Activated T-helper 1 cell treated with anti-CD3 and anti-CD28 coated beads, Interleukin-12 subunit alpha, Interleukin-12 subunit beta, Interleukin-2, Interleukin-4 antibody, amounts not matched to agents 30 ng/mL and 10 ng/mL and 1 ng/mL, durations not matched to agents 14 hours and 24 hours and 36 hours (primary cell): ENCODE measurements at regions of chr3 and their contacts with region 1.

Region 1: GRCh38 chr3:188417271-188417696 is 263.3 kb downstream of the LPP start:
- DNase-seq: no peak
- H3K4me3 Mint-ChIP-seq: no peak overlapping the region
- H3K27ac Mint-ChIP-seq: no peak overlapping the region
- H3K4me1 Mint-ChIP-seq: peaks cover 32% of the 10 kb centered on the region
- H3K27me3 Mint-ChIP-seq: no peaks in the 10 kb centered on the region

Region 2: DNA sequence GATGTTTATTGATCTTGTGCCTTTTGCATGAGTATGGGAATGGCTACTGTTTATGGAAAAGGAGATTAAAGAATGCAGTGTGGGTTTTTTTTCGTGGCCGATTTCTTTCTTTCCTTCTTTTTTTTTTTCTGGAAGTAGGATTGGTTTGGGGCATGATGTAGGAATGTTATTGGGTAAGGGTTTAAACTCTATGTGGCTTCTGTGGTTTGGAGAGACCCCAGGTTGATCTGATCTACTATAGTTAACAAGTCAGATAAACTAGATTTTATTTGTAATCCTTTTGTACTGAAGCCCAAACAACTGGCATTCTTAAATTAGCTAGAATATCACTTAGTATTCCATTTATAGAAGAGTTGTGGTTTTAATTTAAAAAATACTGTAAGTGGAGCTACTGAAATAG is 41.5 kb after region 1 on chr3:
- intact Hi-C with region 1: loop called (anchors 5 kb)
- DNase-seq: no peak
- H3K4me3 Mint-ChIP-seq: no peak overlapping the region
- H3K27ac Mint-ChIP-seq: no peak overlapping the region
- H3K4me1 Mint-ChIP-seq: peaks cover 4% of the 10 kb centered on the region
- H3K27me3 Mint-ChIP-seq: peaks cover 2% of the 10 kb centered on the region

Region 3: DNA sequence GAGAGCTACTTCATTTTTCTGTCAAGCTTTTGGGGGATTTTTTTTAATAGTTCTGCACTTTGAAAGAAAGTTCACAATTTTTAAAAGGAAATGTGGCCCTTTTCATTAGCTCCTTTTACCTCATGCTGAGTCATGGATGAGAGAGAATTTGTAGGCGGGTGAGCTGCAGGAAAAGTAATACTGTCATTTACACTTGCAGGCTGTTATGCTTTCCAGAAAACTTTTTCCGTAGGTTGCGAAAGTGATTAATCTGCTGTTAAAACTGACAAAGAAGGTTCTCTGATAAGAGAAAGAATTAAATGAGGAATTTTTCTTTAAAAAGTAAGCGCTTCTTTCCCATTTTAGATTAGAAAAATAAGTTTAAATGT is 166.9 kb after region 1 on chr3:
- intact Hi-C with region 1: no loop called
- DNase-seq: no peak
- H3K4me3 Mint-ChIP-seq: no peak overlapping the region
- H3K27ac Mint-ChIP-seq: no peak overlapping the region
- H3K4me1 Mint-ChIP-seq: no peaks in the 10 kb centered on the region
- H3K27me3 Mint-ChIP-seq: no peaks in the 10 kb centered on the region